Dendritic cell treated with granulocyte-macrophage colony-stimulating factor and Interleukin-4, amounts not matched to agents 40 ng/mL and 50 ng/mL, for 4 days (primary cell): ENCODE measurements at regions of chr15 and their contacts with region 1.

Region 1: DNA sequence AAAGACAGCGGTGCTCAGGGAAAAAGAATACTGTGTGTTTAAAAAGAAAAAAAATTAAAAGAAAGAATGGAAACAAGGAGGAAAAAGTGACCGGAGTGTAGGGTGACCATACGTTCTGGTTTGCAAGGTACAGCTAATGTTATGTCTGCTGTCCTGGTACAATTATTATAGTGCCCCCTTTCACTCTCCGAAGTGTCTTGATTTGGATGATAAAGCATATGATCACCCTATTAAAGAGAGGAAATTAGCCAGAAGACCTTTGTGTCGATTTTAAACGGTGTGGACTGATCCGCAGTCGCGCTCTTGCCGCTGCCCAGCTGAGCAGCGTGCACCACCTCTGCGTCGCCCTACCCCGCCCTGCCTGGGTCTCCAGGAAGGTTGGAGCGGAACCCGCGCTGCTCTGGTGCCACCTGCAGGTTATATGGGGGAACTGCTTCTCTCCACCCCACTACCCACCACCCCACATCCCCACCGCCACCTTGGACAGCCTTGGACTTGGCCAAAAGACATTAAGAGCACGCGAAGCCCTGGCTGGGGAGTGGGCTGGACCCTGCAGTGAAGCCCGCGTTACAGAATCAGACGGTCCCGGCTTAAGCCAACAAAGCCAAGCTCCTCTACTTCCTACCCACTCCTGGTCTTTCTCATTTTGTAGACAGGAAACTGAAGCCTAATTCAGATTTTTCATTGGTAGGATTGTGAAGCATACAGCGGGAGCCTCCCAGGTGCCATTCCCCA is 41.2 kb upstream of the UBE2Q2 start:
- H3K4me3 Mint-ChIP-seq: peak overlapping the region; percentile 41
- H3K27ac Mint-ChIP-seq: no peak overlapping the region
- H3K4me1 Mint-ChIP-seq: peaks cover 11% of the 10 kb centered on the region
- H3K27me3 Mint-ChIP-seq: peaks cover 37% of the 10 kb centered on the region

Region 2: GRCh38 chr15:75684642-75685041 is 117.4 kb before region 1 on chr15:
- intact Hi-C with region 1: loop called (anchors 2 kb)
- H3K4me3 Mint-ChIP-seq: no peak overlapping the region
- H3K27ac Mint-ChIP-seq: no peak overlapping the region
- H3K4me1 Mint-ChIP-seq: no peaks in the 10 kb centered on the region
- H3K27me3 Mint-ChIP-seq: peaks cover 17% of the 10 kb centered on the region

Region 3: DNA sequence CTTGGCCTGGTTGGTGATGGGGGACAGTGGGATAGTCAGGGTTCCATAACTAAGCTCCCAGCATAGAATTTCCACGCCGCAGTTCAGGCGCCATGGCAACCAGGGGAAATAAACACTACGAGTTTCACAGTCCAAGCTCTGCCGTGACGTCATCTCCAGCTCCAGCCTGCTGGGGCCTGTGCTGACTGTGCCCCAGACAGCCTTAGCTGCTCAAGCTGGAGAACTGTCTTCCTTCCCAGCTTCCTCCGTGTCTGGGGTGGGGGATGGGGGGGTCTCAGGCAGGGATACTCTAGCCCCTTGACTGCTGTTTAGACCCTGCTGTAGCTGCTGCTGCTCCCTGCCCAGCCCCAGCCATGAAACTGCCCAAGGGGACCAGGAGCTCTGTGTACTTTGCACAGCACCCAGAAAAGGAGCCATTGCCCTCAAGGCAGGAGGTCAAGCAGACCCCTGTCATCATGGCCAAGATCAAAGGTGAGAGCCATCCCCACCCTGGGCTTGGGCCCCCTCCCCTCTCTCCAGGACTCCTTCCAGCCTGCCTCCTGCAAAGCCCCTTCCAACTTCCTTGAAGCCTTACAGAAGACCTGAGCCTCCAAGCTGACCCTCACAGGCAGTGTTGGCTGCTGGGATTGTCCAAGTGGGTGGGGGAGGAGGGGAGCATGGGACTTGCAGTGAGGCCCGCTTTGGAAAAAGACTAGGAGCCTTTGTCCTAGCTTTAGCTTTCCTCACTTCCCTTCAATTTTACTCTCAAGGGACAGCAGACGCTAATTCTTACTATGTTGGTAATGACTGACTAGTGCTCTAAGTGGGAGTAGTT is 78.0 kb before region 1 on chr15:
- intact Hi-C with region 1: loop called (anchors 1 kb)
- H3K4me3 Mint-ChIP-seq: no peak overlapping the region
- H3K27ac Mint-ChIP-seq: peak overlapping the region; percentile 70
- H3K4me1 Mint-ChIP-seq: peaks cover 17% of the 10 kb centered on the region
- H3K27me3 Mint-ChIP-seq: peaks cover 35% of the 10 kb centered on the region